H1 (cell line): ENCODE measurements at regions of chr10 and their contacts with region 1.

Region 1: DNA sequence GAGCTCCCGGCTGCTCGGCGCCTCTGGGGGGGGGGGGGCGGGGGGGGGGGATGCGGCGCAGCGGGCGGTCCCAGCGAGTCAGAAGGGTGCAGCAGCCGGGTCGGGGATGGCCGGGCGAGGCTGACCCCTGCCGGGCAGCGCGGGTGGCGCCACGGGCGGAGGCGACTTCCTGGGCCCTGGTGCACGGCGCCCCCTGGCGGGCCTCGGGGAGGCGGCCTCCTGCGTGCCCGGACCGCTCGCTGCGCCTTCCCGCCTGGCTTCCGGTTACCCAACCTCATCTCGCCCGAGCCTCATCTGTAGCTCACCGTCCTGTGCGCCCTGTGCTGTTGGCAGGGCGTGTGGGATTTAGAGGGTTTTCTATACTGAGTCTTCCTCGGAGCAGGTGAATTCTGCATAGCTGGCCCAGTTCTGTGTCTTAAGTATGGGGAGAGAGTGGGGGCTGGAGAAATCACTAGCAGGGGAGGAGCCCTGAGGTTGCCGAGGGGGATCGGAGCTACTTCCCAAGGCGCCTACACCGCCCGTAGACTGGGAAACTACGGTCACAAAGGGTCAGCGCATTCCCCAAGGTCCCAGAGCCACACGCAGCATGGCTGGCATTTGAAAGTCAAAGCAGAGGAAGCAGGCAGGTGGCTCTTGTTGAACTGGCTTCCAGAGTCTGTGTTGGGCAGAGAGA is 28.3 kb upstream of the WDFY4 start:
- DNase-seq: peak; percentile 78 to 96
- H3K4me3 ChIP-seq: peak overlapping the region in 3 of 4 experiments; percentile 18 to 54 (median 32); a peak in 6 of 8 replicates
- H3K27ac ChIP-seq: no peak overlapping the region
- H3K4me1 ChIP-seq: peaks cover 0 to 12% (median 5%) of the 10 kb centered on the region in 4 experiments; a peak in 5 of 7 replicates
- H3K27me3 ChIP-seq: peaks cover 0 to 20% (median 9%) of the 10 kb centered on the region in 4 experiments; a peak in 5 of 7 replicates
- CTCF ChIP-seq: peak; percentile 96 to 99 (median 99)
- EP300 ChIP-seq: no peak
- POLR2A ChIP-seq: no peak
- RAD21 ChIP-seq: peak; percentile 83 to 90

Region 2: GRCh38 chr10:48523820-48524758 is 132.3 kb before region 1 on chr10:
- CTCF ChIA-PET with region 1: interaction called, 28 read pairs
- POLR2A ChIA-PET with region 1: no interaction called
- DNase-seq: peak in 1 of 2 experiments; percentile 83
- H3K4me3 ChIP-seq: peak overlapping the region; percentile 54 to 78 (median 73)
- H3K27ac ChIP-seq: no peak overlapping the region
- H3K4me1 ChIP-seq: peaks cover 2 to 16% (median 3%) of the 10 kb centered on the region in 4 experiments; a peak in 6 of 7 replicates
- H3K27me3 ChIP-seq: peaks cover 0 to 2% (median 0%) of the 10 kb centered on the region in 4 experiments; a peak in 1 of 7 replicates
- CTCF ChIP-seq: peak; percentile 56 to 82 (median 71)
- EP300 ChIP-seq: no peak; a peak in 1 of 3 replicates
- POLR2A ChIP-seq: no peak
- RAD21 ChIP-seq: peak; percentile 41 to 73; a peak in 3 of 4 replicates

Region 3: GRCh38 chr10:48577158-48577557 is 79.2 kb before region 1 on chr10:
- CTCF ChIA-PET with region 1: interaction called, 22 read pairs
- POLR2A ChIA-PET with region 1: no interaction called
- DNase-seq: no peak
- H3K4me3 ChIP-seq: no peak overlapping the region
- H3K27ac ChIP-seq: no peak overlapping the region
- H3K4me1 ChIP-seq: no peaks in the 10 kb centered on the region; a peak in 1 of 7 replicates
- H3K27me3 ChIP-seq: no peaks in the 10 kb centered on the region
- CTCF ChIP-seq: no peak
- EP300 ChIP-seq: no peak
- POLR2A ChIP-seq: no peak
- RAD21 ChIP-seq: no peak

Region 4: DNA sequence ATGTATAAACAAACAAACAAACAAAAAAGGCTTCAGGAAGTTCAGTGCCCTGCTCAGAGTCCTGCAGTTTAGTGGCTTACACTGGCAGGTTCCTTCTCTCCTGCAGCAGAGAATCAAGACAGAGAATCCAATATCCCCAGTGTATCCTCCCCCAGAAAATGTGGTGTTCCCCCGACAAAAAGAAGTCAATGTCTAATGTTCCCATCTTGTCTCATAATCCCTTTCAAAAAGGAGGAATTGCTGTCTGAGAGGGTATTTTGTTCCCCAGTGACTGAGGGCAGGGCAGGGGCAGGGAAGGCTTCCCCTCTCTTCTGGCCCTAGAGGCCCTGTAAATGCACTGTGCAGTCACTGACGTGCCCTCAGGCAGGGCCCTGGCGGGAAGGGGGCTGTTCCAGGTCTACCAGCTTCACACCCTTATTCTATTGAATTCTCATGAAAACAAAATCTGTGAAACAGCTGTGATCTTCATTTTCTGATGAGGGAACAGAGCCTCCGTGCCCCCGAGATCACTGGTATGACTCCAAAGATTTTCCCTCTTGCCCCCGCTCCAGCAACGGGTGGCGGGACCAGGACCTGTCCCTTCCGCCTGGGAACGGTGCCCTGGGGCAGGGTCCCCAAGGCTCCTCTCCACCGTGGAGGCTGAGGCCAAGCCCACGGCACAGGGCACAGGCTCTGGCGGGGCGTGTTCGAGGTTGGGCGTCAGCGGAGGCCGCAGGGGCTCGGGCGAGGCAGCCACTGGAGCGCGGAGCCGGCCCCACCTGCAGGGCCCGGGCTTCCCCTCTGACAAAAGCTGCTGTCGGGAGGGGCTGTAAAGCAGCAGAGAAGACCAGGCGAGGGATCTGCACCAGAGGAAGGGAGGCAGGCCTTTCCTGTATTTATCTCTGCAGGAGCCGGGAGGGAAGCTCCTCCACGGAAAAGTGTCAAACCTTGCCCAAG is 14.9 kb after region 1 on chr10:
- CTCF ChIA-PET with region 1: interaction called, 13 read pairs
- POLR2A ChIA-PET with region 1: no interaction called
- DNase-seq: peak in 1 of 2 experiments; percentile 63
- H3K4me3 ChIP-seq: peak overlapping the region in 2 of 4 experiments; percentile 23 to 42; a peak in 4 of 8 replicates
- H3K27ac ChIP-seq: no peak overlapping the region
- H3K4me1 ChIP-seq: peaks cover 0 to 5% (median 2%) of the 10 kb centered on the region in 4 experiments; a peak in 4 of 7 replicates
- H3K27me3 ChIP-seq: no peaks in the 10 kb centered on the region; a peak in 2 of 7 replicates
- CTCF ChIP-seq: no peak
- EP300 ChIP-seq: no peak
- POLR2A ChIP-seq: no peak
- RAD21 ChIP-seq: no peak

Region 5: DNA sequence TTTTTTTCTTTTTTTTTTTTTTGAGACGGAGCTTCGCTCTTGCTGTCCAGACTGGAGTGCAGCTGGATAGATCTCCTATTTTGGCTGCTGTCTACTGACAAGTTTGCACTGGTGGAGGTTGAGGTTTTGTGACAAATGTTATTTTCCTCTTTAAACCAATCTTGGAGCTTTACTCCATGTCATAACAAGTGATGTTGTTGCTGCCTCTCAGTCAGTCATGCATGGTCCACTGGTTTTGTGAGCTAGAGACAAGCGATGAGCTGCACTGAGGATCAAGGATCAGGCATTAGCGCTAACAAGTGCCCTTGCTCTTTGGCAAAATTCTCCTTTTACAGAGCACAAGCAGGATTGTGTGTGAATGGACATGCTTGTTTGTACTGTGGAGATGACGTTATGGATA is 27.5 kb after region 1 on chr10:
- CTCF ChIA-PET with region 1: no interaction called
- POLR2A ChIA-PET with region 1: no interaction called
- DNase-seq: no peak
- H3K4me3 ChIP-seq: no peak overlapping the region
- H3K27ac ChIP-seq: no peak overlapping the region
- H3K4me1 ChIP-seq: no peaks in the 10 kb centered on the region
- H3K27me3 ChIP-seq: no peaks in the 10 kb centered on the region
- CTCF ChIP-seq: no peak
- EP300 ChIP-seq: no peak
- POLR2A ChIP-seq: no peak
- RAD21 ChIP-seq: no peak

Region 6: GRCh38 chr10:48765039-48765438 is 108.7 kb after region 1 on chr10:
- CTCF ChIA-PET with region 1: interaction called, 15 read pairs
- POLR2A ChIA-PET with region 1: no interaction called
- DNase-seq: no peak
- H3K4me3 ChIP-seq: no peak overlapping the region
- H3K27ac ChIP-seq: no peak overlapping the region
- H3K4me1 ChIP-seq: no peaks in the 10 kb centered on the region; a peak in 1 of 7 replicates
- H3K27me3 ChIP-seq: no peaks in the 10 kb centered on the region
- CTCF ChIP-seq: peak in 1 of 3 experiments; percentile 12; a peak in 1 of 4 replicates
- EP300 ChIP-seq: no peak
- POLR2A ChIP-seq: no peak
- RAD21 ChIP-seq: peak in 1 of 2 experiments; percentile 14; a peak in 1 of 4 replicates

Region 7: DNA sequence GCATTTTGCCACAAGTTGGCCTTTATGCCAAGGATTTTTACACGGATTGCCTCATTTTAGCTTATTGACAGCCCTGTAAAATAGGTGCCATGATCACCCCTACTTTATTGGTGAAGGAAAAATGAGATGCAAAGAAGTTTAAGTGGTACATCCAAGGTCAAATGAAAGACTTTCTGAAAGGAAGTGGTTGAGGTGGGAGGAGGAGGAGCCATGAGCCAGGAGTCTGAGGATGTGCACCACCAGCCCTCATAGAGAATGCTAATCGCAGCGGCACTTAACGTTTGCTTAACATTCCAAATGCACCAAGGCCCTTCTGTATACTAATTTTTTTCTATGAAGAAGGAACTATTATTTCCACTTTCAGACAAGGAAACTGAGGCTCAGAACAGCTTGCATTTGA is 314.3 kb after region 1 on chr10:
- CTCF ChIA-PET with region 1: interaction called, 18 read pairs
- POLR2A ChIA-PET with region 1: no interaction called
- DNase-seq: no peak
- H3K4me3 ChIP-seq: no peak overlapping the region
- H3K27ac ChIP-seq: no peak overlapping the region
- H3K4me1 ChIP-seq: no peaks in the 10 kb centered on the region; a peak in 1 of 7 replicates
- H3K27me3 ChIP-seq: no peaks in the 10 kb centered on the region
- CTCF ChIP-seq: no peak
- EP300 ChIP-seq: no peak
- POLR2A ChIP-seq: no peak
- RAD21 ChIP-seq: no peak